K562 (cell line): ENCODE measurements at regions of chr7 and their contacts with region 1.

Region 1: DNA sequence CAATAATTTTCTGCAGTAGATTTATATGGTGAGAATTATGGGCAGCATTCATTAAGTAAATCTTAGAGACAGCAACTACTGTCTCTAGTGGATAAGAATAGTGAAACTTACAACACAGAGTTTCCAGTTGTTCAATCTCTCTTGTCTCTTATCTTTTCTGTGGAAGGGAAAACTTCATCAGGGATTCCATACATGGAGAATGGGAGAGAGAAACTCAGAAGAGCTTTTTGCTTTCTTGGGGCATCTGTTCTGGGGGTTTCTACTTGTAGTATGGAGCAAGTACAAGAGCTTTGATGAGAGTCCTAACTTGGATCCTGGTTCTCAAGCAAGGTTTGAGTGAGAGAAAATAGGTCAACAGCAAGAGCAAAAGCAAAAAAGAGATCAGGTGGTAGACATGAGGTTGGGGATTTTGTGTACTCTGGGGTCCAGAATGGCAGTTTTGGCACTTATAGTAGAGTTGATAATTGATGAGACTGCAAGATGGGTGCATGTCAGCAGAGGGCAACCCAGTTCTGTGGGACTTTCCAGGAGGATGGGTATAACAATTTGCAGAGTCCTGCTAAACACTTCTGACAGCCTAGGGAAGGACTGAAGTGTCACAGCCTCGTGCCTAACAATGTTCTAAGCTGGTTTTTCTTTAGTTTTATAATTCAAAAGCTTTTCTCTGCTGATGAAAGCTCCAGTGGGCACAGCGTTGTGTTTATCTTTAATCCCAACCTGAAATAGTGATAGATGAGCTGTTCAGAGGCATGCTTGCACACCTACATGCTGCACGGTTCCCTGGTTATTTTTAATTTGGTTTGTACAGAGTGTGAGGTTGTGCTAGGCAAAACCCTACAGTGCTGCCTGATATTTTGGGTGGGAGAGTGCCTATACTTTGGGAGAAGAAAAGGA is 32.0 kb upstream of the STRIP2 start:
- DNase-seq: peak in 2 of 4 experiments; percentile 55 to 70
- ATAC-seq: peak; percentile 84
- H3K4me3 ChIP-seq: no peak overlapping the region
- H3K27ac ChIP-seq: peak overlapping the region; percentile 65; the same call in 2 of the 3 replicates
- H3K4me1 ChIP-seq: peaks cover 6 to 21% of the 10 kb centered on the region in 2 experiments; a peak in 4 of 5 replicates
- H3K27me3 ChIP-seq: no peaks in the 10 kb centered on the region
- CTCF ChIP-seq: peak; percentile 67 to 86 (median 68)
- EP300 ChIP-seq: no peak
- POLR2A ChIP-seq: no peak
- RAD21 ChIP-seq: peak; percentile 73 to 84

Region 2: DNA sequence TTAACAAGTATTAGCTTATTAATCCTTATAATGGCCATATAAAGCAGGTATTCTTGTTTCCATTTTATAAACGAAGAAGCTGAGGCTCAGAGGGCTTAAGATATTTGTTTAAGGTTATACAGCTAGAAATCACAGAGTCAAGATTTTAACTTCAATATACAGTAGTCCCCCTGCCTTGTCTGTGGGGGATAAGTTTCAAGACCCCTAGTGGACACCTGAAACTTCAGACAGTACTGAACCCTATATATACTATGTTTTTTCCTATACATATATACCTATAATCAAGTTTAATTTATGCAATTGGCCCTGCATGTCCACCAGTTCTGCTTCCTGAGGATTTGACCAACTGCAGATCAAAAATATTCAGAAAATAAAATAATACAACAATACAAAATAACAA is 12.4 kb before region 1 on chr7:
- CTCF ChIA-PET with region 1: no interaction called
- POLR2A ChIA-PET with region 1: interaction called, 12 read pairs
- in situ Hi-C with region 1: no loop called
- intact Hi-C with region 1: no loop called
- DNase-seq: no peak
- ATAC-seq: peak; percentile 51; the same call in 1 of the 3 replicates
- H3K4me3 ChIP-seq: no peak overlapping the region
- H3K27ac ChIP-seq: no peak overlapping the region
- H3K4me1 ChIP-seq: no peaks in the 10 kb centered on the region
- H3K27me3 ChIP-seq: no peaks in the 10 kb centered on the region
- CTCF ChIP-seq: peak in 2 of 3 experiments; percentile 18 to 22; a peak in 2 of 6 replicates
- EP300 ChIP-seq: no peak
- POLR2A ChIP-seq: no peak
- RAD21 ChIP-seq: no peak

Region 3: GRCh38 chr7:129468087-129468486 is 65.9 kb after region 1 on chr7:
- CTCF ChIA-PET with region 1: interaction called, 20 read pairs
- POLR2A ChIA-PET with region 1: interaction called, 3 read pairs
- in situ Hi-C with region 1: no loop called
- intact Hi-C with region 1: loop called (anchors 1 kb)
- DNase-seq: no peak
- ATAC-seq: no peak
- H3K4me3 ChIP-seq: no peak overlapping the region
- H3K27ac ChIP-seq: no peak overlapping the region
- H3K4me1 ChIP-seq: no peaks in the 10 kb centered on the region
- H3K27me3 ChIP-seq: no peaks in the 10 kb centered on the region
- CTCF ChIP-seq: no peak
- EP300 ChIP-seq: no peak
- POLR2A ChIP-seq: no peak
- RAD21 ChIP-seq: no peak